PC-3 (cell line): ENCODE measurements at regions of chr5 and their contacts with region 1.

Region 1: GRCh38 chr5:128506643-128507042 is 31.4 kb downstream of the FBN2 start:
- DNase-seq: no peak
- ATAC-seq: no peak
- H3K4me3 ChIP-seq: no peak overlapping the region
- H3K27ac ChIP-seq: no peak overlapping the region
- H3K4me1 ChIP-seq: no peaks in the 10 kb centered on the region
- H3K27me3 ChIP-seq: no peaks in the 10 kb centered on the region
- CTCF ChIP-seq: no peak

Region 2: GRCh38 chr5:128475693-128476092 is 30.9 kb before region 1 on chr5:
- CTCF ChIA-PET with region 1: no interaction called
- POLR2A ChIA-PET with region 1: no interaction called
- intact Hi-C with region 1: loop called (anchors 1 kb)
- DNase-seq: no peak
- ATAC-seq: no peak
- H3K4me3 ChIP-seq: no peak overlapping the region
- H3K27ac ChIP-seq: no peak overlapping the region
- H3K4me1 ChIP-seq: no peaks in the 10 kb centered on the region
- H3K27me3 ChIP-seq: no peaks in the 10 kb centered on the region
- CTCF ChIP-seq: no peak

Region 3: GRCh38 chr5:128632264-128632663 is 125.6 kb after region 1 on chr5:
- CTCF ChIA-PET with region 1: no interaction called
- POLR2A ChIA-PET with region 1: no interaction called
- intact Hi-C with region 1: no loop called
- DNase-seq: peak; percentile 72
- ATAC-seq: peak; percentile 78
- H3K4me3 ChIP-seq: no peak overlapping the region
- H3K27ac ChIP-seq: no peak overlapping the region
- H3K4me1 ChIP-seq: peaks cover 7% of the 10 kb centered on the region; the same call in 1 of the 2 replicates
- H3K27me3 ChIP-seq: no peaks in the 10 kb centered on the region
- CTCF ChIP-seq: no peak